ENCODE measurements at regions of chr1 and their contacts with region 1.

Region 1: DNA sequence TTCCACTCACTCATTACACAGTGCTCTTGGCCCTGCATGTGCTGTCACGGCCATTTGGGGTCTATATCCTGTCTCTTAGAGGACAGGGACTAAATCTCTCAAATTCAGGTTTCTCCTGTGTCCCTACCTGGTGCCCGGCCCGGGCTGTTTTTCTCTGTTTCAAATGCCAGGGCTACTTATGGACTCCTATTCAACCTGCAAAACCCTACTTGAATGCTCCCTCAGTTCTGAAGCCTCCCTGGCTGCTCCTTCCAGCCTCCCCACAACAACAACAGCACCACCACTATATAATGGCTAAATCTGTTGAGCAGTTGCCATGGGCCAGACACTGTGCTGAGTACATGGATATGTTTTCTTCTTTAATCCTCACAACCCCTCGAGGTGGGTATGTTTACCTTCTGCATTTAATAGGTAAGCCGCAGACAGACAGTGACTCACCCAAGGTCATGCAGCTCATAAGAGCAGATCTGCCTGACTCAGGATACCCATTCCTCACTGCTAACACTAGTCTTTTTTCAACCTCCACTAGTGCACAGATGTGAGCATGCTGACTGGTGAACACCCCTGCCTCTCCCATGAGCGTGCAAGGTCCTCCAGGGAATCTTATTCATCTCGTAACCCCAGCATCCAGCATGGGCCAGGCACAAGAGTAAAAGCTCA is 29.9 kb downstream of the DHRS3 start:
- DNase-seq: no peak
- H3K4me3 ChIP-seq: no peak overlapping the region
- H3K27ac ChIP-seq: no peak overlapping the region
- H3K4me1 ChIP-seq: peaks cover 0 to 8% (median 1%) of the 10 kb centered on the region in 4 donors
- H3K27me3 ChIP-seq: no peaks in the 10 kb centered on the region
- CTCF ChIP-seq: no peak
- EP300 ChIP-seq: no peak
- POLR2A ChIP-seq: no peak

Region 2: GRCh38 chr1:12177999-12178441 is 410.1 kb before region 1 on chr1:
- in situ Hi-C with region 1: no loop called
- intact Hi-C with region 1: no loop called
- DNase-seq: peak; percentile 64
- H3K4me3 ChIP-seq: no peak overlapping the region
- H3K27ac ChIP-seq: peak overlapping the region; percentile 51 to 87 (median 82)
- H3K4me1 ChIP-seq: peaks cover 9 to 74% (median 37%) of the 10 kb centered on the region in 4 donors
- H3K27me3 ChIP-seq: no peaks in the 10 kb centered on the region
- CTCF ChIP-seq: no peak
- EP300 ChIP-seq: no peak
- POLR2A ChIP-seq: no peak

Region 3: GRCh38 chr1:12472798-12473551 is 115.1 kb before region 1 on chr1:
- in situ Hi-C with region 1: no loop called
- intact Hi-C with region 1: no loop called
- DNase-seq: peak; percentile 37
- H3K4me3 ChIP-seq: no peak overlapping the region
- H3K27ac ChIP-seq: peak overlapping the region; percentile 85 to 90 (median 88)
- H3K4me1 ChIP-seq: peaks cover 46 to 70% (median 57%) of the 10 kb centered on the region in 4 donors
- H3K27me3 ChIP-seq: no peaks in the 10 kb centered on the region
- CTCF ChIP-seq: no peak
- EP300 ChIP-seq: no peak
- POLR2A ChIP-seq: no peak

Region 4: GRCh38 chr1:12501661-12502060 is 86.5 kb before region 1 on chr1:
- in situ Hi-C with region 1: no loop called
- intact Hi-C with region 1: no loop called
- DNase-seq: no peak
- H3K4me3 ChIP-seq: no peak overlapping the region
- H3K27ac ChIP-seq: no peak overlapping the region
- H3K4me1 ChIP-seq: no peaks in the 10 kb centered on the region
- H3K27me3 ChIP-seq: no peaks in the 10 kb centered on the region
- CTCF ChIP-seq: no peak
- EP300 ChIP-seq: no peak
- POLR2A ChIP-seq: no peak

Region 5: DNA sequence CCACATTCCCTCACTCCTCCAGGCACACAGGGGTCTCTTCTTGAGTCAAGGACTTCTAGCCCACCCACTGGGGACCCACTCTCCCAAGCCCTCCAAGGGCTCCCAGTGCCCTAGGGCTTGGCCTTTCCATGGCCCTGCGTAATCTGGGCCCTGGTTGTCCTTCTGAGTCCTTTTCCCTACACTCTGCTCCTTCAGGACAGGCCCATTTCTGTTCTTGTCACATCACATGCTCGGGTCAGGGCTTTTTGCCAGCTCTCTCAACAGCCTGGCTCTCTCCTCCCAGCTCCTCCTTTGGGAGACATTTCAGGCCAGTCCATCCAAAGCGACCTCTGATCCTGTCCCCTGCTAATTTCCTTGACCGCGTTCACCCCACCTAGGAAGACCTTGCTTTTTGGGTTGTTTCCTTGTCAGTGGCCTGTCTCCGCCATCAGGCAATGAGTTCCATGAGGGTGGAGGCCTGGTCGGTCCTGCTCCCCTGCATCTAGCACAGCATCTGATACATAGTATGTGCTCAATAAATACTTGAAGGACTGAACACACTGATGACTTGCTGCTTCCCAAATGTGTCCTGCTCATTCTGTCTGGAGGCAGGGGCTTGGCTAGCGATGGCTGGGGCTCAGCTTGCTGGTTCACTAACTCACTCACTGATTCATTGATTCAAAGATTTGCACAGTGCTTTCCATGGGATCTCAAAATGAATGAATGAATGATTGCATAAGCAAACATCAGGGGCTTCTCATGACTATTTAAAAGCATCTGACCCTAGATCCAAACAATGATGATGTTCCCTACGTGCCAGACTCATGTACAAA is 14.9 kb before region 1 on chr1:
- in situ Hi-C with region 1: no loop called
- intact Hi-C with region 1: loop called (anchors 1 kb)
- DNase-seq: no peak
- H3K4me3 ChIP-seq: no peak overlapping the region
- H3K27ac ChIP-seq: peak overlapping the region in 1 of 4 donors; percentile 17
- H3K4me1 ChIP-seq: no peaks in the 10 kb centered on the region
- H3K27me3 ChIP-seq: no peaks in the 10 kb centered on the region
- CTCF ChIP-seq: no peak
- EP300 ChIP-seq: no peak
- POLR2A ChIP-seq: no peak

Region 6: GRCh38 chr1:12692967-12693782 is 105.1 kb after region 1 on chr1:
- in situ Hi-C with region 1: no loop called
- intact Hi-C with region 1: no loop called
- DNase-seq: no peak
- H3K4me3 ChIP-seq: no peak overlapping the region
- H3K27ac ChIP-seq: no peak overlapping the region
- H3K4me1 ChIP-seq: no peaks in the 10 kb centered on the region
- H3K27me3 ChIP-seq: no peaks in the 10 kb centered on the region
- CTCF ChIP-seq: no peak
- EP300 ChIP-seq: no peak
- POLR2A ChIP-seq: no peak